ENCODE measurements at regions of chr6 and their contacts with region 1.

Region 1: GRCh38 chr6:13795041-13795750 is 19.2 kb downstream of the MCUR1 start:
- DNase-seq: peak; percentile 25
- H3K4me3 ChIP-seq: no peak overlapping the region
- H3K27me3 ChIP-seq: no peaks in the 10 kb centered on the region
- CTCF ChIP-seq: peak; percentile 92

Region 2: GRCh38 chr6:13762611-13763441 is 32.4 kb before region 1 on chr6:
- CTCF ChIA-PET with region 1: interaction called, 4 read pairs
- POLR2A ChIA-PET with region 1: interaction called, 11 read pairs
- DNase-seq: peak; percentile 85
- H3K4me3 ChIP-seq: no peak overlapping the region
- H3K27me3 ChIP-seq: no peaks in the 10 kb centered on the region; the same call in 1 of the 2 replicates
- CTCF ChIP-seq: no peak

Region 3: DNA sequence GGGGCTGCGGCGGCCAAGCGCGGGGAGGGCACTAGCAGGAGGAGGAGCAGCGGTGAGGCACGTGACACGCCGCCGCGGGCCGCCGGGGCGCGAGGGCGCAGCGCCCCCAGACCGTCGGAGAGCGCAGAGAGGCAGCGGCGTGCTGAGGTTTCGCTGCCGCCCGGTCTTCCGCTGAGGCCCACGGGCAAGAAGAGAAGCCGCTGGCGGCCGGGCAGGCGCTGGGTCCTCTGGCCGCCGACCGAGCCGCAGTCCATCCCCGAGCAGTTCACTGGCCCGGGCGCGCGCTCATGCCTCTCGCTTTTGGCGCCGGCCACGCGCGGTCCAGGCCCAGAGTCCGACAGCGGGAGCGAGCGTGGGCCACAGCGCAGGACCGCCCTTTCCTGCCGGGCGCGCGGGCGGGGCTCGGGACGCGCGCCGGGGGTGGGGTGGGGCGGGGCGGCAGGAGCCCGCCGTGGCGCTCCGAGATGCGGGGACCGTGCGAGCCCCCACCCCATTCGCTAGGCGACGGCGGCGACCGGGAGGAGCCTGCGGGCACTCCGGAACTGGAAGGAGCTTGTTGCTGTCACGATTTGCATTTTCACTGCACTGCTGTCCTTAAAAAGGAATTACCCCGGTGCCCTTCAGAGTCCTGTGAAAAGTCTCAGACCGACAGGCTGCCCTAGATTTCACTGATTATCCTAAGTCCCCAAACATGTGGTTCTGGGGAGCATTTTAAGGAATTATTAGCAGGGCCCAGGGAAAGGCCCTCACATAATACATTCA is 19.2 kb after region 1 on chr6 and contains the start of gene MCUR1:
- CTCF ChIA-PET with region 1: interaction called, 20 read pairs
- POLR2A ChIA-PET with region 1: no interaction called
- DNase-seq: peak; percentile 29
- H3K4me3 ChIP-seq: peak within 1 kb of the TSS; percentile 91
- H3K27me3 ChIP-seq: no peaks in the 10 kb centered on the region
- CTCF ChIP-seq: peak; percentile 12; the same call in 1 of the 2 replicates
- polyA plus RNA-seq, gene MCUR1: 6.2 and 9.4 TPM in 2 replicates